Activated CD4-positive, alpha-beta memory T cell treated with anti-CD3 and anti-CD28 coated beads for 36 hours (primary cell): ENCODE measurements at regions of chrX and their contacts with region 1.

Region 1: DNA sequence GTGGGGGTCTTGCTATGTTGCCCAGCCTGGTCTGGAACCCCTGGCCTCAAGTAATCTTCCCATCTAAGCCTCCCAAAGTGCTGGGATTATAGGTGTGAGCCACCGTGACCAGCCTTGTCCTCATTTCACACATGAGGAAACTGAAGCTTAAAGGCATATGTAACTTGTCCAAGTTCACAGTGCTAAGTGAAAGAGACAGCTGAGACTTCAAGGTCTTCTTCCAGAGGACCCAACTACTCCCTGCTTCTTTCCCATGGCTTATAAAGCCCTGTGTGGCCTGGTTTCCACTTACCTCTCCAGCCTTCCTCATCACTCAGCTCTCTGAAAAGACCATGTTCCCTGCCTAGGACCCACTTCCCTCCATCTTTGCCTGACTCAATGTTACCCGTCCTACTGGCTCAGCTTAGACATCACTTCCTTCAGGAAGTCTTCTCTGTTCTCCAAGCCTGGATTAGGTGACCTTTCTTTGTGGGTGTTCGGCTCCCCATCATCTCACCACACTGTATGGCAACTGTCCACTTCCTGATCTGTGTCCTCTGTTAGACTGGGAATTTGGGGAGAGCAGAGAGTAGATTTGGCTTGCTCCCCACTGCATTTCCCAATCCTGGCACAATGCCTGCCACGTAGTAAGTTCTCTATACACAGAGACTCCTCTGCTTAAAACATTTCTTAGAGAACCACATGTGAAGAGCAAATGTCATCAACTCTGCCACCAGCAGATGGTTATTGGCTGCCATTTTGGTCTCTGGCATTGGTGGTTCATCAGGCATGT is 30.4 kb upstream of the LAMP2 start:
- DNase-seq: no peak
- H3K4me3 Mint-ChIP-seq: no peak overlapping the region
- H3K27ac Mint-ChIP-seq: no peak overlapping the region
- H3K4me1 Mint-ChIP-seq: peaks cover 3% of the 10 kb centered on the region
- H3K27me3 Mint-ChIP-seq: no peaks in the 10 kb centered on the region

Region 2: GRCh38 chrX:120485638-120486520 is 13.6 kb before region 1 on chrX:
- CTCF ChIA-PET with region 1: interaction called, 3 read pairs
- POLR2A ChIA-PET with region 1: no interaction called
- intact Hi-C with region 1: loop called (anchors 1 kb)
- DNase-seq: peak; percentile 69
- H3K4me3 Mint-ChIP-seq: peak overlapping the region; percentile 69
- H3K27ac Mint-ChIP-seq: peak overlapping the region; percentile 86
- H3K4me1 Mint-ChIP-seq: peaks cover 26% of the 10 kb centered on the region
- H3K27me3 Mint-ChIP-seq: no peaks in the 10 kb centered on the region

Region 3: GRCh38 chrX:120549483-120550452 is 50.3 kb after region 1 on chrX:
- CTCF ChIA-PET with region 1: no interaction called
- POLR2A ChIA-PET with region 1: no interaction called
- intact Hi-C with region 1: no loop called
- DNase-seq: peak; percentile 52
- H3K4me3 Mint-ChIP-seq: no peak overlapping the region
- H3K27ac Mint-ChIP-seq: peak overlapping the region; percentile 52
- H3K4me1 Mint-ChIP-seq: peaks cover 19% of the 10 kb centered on the region
- H3K27me3 Mint-ChIP-seq: no peaks in the 10 kb centered on the region

Region 4: GRCh38 chrX:120603707-120604360 is 104.3 kb after region 1 on chrX and contains the start of gene MCTS1:
- CTCF ChIA-PET with region 1: no interaction called
- POLR2A ChIA-PET with region 1: no interaction called
- intact Hi-C with region 1: loop called (anchors 5 kb)
- DNase-seq: peak; percentile 87
- H3K4me3 Mint-ChIP-seq: peak within 1 kb of the TSS; percentile 95
- H3K27ac Mint-ChIP-seq: peak within 1 kb of the TSS; percentile 97
- H3K4me1 Mint-ChIP-seq: peaks cover 8% of the 10 kb centered on the region
- H3K27me3 Mint-ChIP-seq: no peaks in the 10 kb centered on the region
- total RNA-seq, gene MCTS1: 67.5 to 70.9 TPM

Region 5: DNA sequence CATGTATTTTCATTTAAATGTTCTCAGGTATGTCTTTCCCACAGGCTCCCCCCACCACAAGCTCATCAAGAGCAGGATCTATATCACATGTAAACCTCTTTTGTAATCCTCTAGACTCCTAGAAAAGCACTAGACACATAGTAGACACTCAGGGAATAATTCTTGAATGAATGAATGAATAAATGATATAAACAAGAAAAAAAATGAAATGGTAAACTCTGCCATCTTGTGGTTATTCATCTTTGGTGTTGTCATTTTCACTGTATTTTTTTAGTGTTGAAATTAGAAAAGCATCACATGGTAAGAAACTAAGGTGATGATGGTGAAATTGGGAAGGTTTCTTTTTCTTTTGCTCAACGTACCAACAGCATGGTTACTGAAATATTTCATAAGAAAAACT is 164.6 kb after region 1 on chrX:
- CTCF ChIA-PET with region 1: interaction called, 7 read pairs
- POLR2A ChIA-PET with region 1: no interaction called
- intact Hi-C with region 1: loop called (anchors 1 kb)
- DNase-seq: no peak
- H3K4me3 Mint-ChIP-seq: no peak overlapping the region
- H3K27ac Mint-ChIP-seq: no peak overlapping the region
- H3K4me1 Mint-ChIP-seq: peaks cover 6% of the 10 kb centered on the region
- H3K27me3 Mint-ChIP-seq: no peaks in the 10 kb centered on the region

Region 6: DNA sequence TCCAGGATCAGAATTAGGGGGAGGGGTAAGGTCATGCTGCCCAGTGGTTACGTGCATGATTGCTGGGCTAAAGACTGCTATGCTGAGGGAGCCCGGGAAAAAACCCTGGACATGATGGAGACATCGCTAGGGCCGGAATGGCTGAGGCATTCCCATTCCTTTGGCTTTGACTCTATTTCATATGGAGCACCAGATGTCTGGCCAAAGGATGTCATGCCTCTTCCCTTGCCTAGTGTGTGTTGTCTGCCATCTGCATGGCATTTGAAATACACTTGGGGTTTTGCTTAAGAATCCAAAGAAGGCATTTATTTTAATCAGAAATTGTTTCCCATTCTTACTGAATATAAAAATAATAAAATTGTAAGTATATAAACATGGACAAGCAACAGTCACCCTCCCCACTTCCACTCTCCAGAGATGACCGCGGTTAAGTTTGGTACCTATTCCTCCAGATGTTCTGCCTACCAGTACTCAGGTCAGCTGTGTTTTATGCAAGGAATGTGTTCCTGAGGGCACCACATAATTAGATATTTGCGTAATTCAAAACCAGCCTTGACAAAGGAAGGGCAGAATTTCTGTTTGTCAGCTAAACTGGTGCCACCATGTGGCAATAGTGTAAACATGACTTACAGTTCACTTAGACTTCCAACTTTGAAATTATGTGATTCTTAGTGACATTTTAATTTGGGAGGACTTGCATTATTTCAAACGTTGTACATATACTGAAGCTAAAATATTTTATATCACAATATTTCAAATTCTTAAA is 270.3 kb after region 1 on chrX:
- CTCF ChIA-PET with region 1: interaction called, 4 read pairs
- POLR2A ChIA-PET with region 1: no interaction called
- intact Hi-C with region 1: loop called (anchors 1 kb)
- DNase-seq: no peak
- H3K4me3 Mint-ChIP-seq: no peak overlapping the region
- H3K27ac Mint-ChIP-seq: no peak overlapping the region
- H3K4me1 Mint-ChIP-seq: no peaks in the 10 kb centered on the region
- H3K27me3 Mint-ChIP-seq: no peaks in the 10 kb centered on the region

Region 7: DNA sequence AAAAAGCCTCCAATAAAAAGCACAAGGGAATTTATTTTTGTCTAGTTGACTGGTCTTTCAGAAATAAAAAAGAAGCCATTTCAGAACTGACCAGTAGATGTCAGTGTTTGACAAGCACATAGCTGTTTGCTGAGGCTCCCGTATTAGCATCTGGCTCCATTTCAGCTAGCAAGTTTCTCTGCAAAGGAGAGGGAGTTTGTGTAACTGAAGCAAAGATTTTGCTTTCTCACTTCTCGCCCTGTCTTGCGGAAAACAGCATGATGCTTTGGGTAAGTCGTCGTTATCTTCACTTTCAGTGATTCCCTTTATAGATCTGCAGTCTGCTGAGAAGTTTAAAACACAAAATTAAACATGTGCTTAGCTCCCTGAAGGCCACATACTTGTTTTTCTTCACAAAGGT is 290.6 kb after region 1 on chrX:
- CTCF ChIA-PET with region 1: no interaction called
- POLR2A ChIA-PET with region 1: no interaction called
- intact Hi-C with region 1: loop called (anchors 5 kb)
- DNase-seq: peak; percentile 16
- H3K4me3 Mint-ChIP-seq: peak overlapping the region; percentile 39
- H3K27ac Mint-ChIP-seq: peak overlapping the region; percentile 89
- H3K4me1 Mint-ChIP-seq: peaks cover 18% of the 10 kb centered on the region
- H3K27me3 Mint-ChIP-seq: no peaks in the 10 kb centered on the region